Activated naive CD8-positive, alpha-beta T cell treated with anti-CD3 and anti-CD28 coated beads, Interleukin-2, amount 10 ng/mL, durations not matched to agents 7 days and 5 days (primary cell): ENCODE measurements at regions of chr10 and their contacts with region 1.

Region 1: DNA sequence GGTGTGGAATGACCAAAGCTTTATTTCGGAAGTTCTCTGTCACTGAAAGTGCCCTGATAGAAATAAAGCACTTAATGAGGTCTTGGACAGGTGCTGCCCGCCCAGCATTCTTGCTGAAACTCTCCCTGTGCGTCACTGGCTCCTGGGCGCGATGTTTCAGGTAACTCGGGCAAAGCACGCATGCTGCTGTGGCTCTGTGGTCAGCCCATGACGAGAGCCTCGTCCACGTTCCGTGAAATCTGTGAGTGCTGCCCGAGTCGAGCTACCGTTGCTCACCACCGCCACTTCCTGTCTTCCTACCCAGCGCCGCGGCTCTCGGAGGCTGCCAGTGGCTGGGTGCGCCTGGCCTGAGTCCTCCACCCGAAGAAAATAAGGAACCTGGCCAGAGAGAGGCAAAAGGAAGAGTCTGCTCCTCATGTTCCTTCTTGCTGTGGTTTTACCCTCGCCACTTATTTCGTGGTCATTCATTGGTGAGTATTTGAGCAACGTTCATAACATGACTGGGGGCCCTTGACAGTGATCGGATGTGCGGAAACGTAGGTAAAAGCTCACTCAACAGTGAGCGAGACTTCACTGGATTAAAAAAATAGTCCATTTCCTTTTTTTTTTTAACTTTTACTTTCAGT is 95.5 kb downstream of the MAP3K8 start:
- DNase-seq: peak; percentile 86
- ATAC-seq: peak; percentile 87
- H3K4me3 Mint-ChIP-seq: peak overlapping the region; percentile 85
- H3K27ac Mint-ChIP-seq: peak overlapping the region; percentile 99
- H3K4me1 Mint-ChIP-seq: peaks cover 65% of the 10 kb centered on the region
- H3K27me3 Mint-ChIP-seq: no peaks in the 10 kb centered on the region

Region 2: GRCh38 chr10:30413996-30414576 is 115.4 kb before region 1 on chr10:
- POLR2A ChIA-PET with region 1: interaction called, 11 read pairs
- DNase-seq: no peak
- ATAC-seq: peak; percentile 28
- H3K4me3 Mint-ChIP-seq: no peak overlapping the region
- H3K27ac Mint-ChIP-seq: no peak overlapping the region
- H3K4me1 Mint-ChIP-seq: peaks cover 33% of the 10 kb centered on the region
- H3K27me3 Mint-ChIP-seq: no peaks in the 10 kb centered on the region

Region 3: DNA sequence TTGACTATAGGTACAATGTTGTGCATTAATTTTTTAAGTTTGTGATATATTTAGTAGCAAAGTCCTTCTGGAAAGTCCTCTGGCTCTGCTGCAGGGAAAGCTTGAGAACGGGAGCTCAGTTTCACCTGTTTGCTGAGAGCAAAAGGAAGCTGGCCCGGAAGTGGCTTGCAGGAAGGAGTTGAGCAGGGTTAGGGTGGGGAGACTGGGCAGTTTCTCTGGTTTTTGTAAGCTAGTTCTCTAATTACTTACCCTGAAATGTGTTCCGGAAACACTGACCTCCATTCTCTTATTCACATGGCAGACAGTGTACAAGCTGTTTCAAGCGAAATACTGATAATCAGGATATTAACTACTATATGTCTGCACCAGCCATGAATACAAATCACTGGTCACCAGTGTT is 73.2 kb before region 1 on chr10:
- POLR2A ChIA-PET with region 1: interaction called, 26 read pairs
- DNase-seq: peak; percentile 45
- ATAC-seq: peak; percentile 82
- H3K4me3 Mint-ChIP-seq: peak overlapping the region; percentile 74
- H3K27ac Mint-ChIP-seq: peak overlapping the region; percentile 88
- H3K4me1 Mint-ChIP-seq: peaks cover 29% of the 10 kb centered on the region
- H3K27me3 Mint-ChIP-seq: no peaks in the 10 kb centered on the region

Region 4: DNA sequence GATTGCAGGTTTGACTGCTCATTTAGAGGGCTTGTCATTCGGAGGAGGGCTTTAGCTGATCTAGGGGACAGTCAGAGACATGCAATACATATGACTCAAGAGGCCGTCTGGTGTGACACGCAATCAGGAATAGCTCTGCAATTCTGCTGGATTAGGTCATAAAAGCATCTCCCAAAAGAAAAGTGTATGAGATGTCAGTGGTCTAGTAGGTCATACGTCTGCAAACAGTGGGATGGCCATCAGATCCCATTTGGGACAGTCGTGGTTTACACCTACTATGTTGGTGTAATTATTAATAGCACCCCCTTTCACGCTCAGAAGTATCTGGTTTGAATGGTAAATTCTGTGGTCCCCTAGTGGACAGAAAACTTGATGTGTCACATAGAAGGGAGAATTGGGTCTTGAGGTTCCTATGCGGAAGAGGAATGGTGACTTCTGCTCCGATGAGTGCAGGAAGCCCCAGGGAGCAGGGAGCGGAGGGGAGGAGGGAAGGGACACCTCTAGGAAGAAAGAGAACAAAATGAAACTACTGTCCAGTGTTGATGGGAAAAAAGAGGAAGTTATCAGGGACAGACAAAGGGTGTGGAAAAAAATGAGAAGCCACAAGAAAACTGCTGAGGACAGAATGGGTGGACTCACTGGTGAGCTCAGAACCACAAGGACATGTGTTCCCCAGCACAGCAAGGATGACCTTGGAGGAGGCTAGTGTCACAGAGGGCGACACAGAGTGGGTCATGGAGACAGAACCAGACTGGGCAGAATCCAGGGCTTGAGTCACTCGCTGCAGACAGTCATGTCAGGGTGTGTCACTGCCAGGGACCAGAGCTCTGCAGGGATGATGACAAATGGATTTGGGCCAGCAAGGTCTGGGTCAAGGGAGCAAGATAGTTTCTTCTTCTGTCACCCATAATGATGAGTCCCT is 35.6 kb before region 1 on chr10:
- POLR2A ChIA-PET with region 1: interaction called, 22 read pairs
- DNase-seq: no peak
- ATAC-seq: no peak
- H3K4me3 Mint-ChIP-seq: peak overlapping the region; percentile 56
- H3K27ac Mint-ChIP-seq: peak overlapping the region; percentile 76
- H3K4me1 Mint-ChIP-seq: peaks cover 70% of the 10 kb centered on the region
- H3K27me3 Mint-ChIP-seq: peaks cover 5% of the 10 kb centered on the region

Region 5: DNA sequence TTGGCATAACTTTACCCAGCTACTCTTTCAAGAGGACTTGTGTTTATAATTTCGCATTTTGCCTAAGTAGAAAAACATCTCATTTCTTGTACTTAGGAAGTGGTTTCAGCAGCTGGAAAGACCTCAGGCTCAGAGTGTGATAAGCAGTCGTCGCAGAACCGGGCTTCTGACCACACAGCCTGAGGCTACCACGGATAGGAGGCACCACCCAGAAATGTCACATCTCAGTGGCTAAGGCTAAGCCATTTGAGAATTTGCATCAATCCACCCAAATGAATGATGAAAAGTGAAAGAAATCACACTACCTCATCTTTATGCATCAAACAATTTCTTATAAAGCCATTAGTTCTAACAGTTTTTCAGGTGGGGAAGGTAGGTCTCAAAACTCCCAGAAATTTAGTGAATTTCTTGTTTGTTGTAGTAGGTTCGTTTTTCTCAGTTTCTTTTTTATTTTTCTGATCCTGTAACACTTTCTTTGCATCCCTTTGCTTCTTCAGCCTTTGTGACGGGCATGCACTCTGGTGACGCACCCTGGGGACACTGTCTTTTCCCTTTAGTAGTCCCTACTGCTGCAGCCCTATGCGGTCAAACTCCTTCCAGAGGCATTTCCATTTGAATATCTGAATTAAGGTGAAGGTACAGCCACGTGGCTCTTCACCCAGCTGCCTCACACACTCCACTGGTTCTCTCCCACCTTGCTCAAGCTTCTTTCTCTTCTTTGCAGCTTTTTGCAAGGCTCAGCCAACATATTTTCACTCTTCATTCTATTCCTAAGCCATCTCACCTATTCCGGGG is 27.0 kb before region 1 on chr10:
- POLR2A ChIA-PET with region 1: interaction called, 65 read pairs
- DNase-seq: peak; percentile 62
- ATAC-seq: peak; percentile 98
- H3K4me3 Mint-ChIP-seq: peak overlapping the region; percentile 75
- H3K27ac Mint-ChIP-seq: peak overlapping the region; percentile 94
- H3K4me1 Mint-ChIP-seq: peaks cover 72% of the 10 kb centered on the region
- H3K27me3 Mint-ChIP-seq: no peaks in the 10 kb centered on the region

Region 6: GRCh38 chr10:30510931-30511700 is 18.4 kb before region 1 on chr10:
- POLR2A ChIA-PET with region 1: interaction called, 65 read pairs
- DNase-seq: no peak
- ATAC-seq: no peak
- H3K4me3 Mint-ChIP-seq: no peak overlapping the region
- H3K27ac Mint-ChIP-seq: peak overlapping the region; percentile 15
- H3K4me1 Mint-ChIP-seq: peaks cover 20% of the 10 kb centered on the region
- H3K27me3 Mint-ChIP-seq: no peaks in the 10 kb centered on the region

Region 7: DNA sequence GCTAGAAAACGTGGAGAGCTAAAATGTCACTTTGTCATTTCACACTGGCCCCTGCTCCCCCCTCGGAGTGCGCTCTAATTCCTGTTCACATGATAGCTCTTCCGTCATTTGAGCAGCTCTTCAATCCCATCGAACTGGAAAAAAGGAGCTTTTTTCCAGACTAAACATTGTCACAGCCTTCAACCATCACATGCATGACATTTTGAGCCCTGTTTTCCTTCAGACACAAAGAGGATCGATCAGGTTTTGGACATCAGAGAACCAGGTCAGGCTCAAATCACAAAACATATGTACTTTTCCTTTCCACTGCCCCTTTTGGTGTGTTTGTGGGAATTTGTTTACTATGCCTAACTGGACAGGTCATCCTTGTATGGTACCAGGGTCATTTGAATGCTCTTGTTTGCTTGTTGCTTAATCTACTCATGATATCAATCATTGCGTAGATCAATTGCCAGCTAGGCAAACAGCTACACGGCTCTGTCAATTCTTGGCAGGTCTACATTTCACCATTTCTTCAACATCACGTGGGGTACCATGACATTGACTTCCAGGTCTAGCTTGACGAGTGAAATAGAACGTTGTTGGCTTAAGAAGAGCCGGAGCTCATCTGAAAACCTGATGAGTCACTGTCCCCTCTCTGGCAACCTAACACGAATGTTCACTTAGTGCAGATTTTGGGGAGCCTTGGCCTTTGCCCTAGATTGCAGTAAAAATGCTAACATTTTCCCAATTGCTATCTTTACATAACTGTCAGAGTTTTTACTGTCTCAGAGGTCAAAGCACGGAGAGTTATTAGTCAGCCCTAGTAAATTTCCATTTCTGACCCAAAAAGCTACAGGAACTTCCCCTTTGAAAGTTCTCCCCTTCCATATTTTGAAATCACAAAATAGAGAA is 12.8 kb after region 1 on chr10:
- POLR2A ChIA-PET with region 1: no interaction called
- DNase-seq: no peak
- ATAC-seq: no peak
- H3K4me3 Mint-ChIP-seq: no peak overlapping the region
- H3K27ac Mint-ChIP-seq: no peak overlapping the region
- H3K4me1 Mint-ChIP-seq: peaks cover 9% of the 10 kb centered on the region
- H3K27me3 Mint-ChIP-seq: peaks cover 11% of the 10 kb centered on the region

Region 8: GRCh38 chr10:30608386-30608785 is 78.9 kb after region 1 on chr10:
- POLR2A ChIA-PET with region 1: no interaction called
- DNase-seq: no peak
- ATAC-seq: no peak
- H3K4me3 Mint-ChIP-seq: no peak overlapping the region
- H3K27ac Mint-ChIP-seq: no peak overlapping the region
- H3K4me1 Mint-ChIP-seq: peaks cover 4% of the 10 kb centered on the region
- H3K27me3 Mint-ChIP-seq: peaks cover 38% of the 10 kb centered on the region